ENCODE measurements at regions of chr5 and their contacts with region 1.

Region 1: GRCh38 chr5:178146020-178146820 is 7.5 kb downstream of the NHP2 start:
- DNase-seq: peak; percentile 49
- H3K4me3 Mint-ChIP-seq: no peak overlapping the region
- H3K27ac Mint-ChIP-seq: no peak overlapping the region
- H3K4me1 Mint-ChIP-seq: peaks cover 50% of the 10 kb centered on the region
- H3K27me3 Mint-ChIP-seq: no peaks in the 10 kb centered on the region

Region 2: GRCh38 chr5:178120868-178121357 is 25.3 kb before region 1 on chr5:
- intact Hi-C with region 1: loop called (anchors 2 kb)
- DNase-seq: peak; percentile 75
- H3K4me3 Mint-ChIP-seq: no peak overlapping the region
- H3K27ac Mint-ChIP-seq: no peak overlapping the region
- H3K4me1 Mint-ChIP-seq: peaks cover 13% of the 10 kb centered on the region
- H3K27me3 Mint-ChIP-seq: peaks cover 11% of the 10 kb centered on the region

Measured in activated T-helper 1 cell treated with anti-CD3 and anti-CD28 coated beads, Interleukin-12 subunit alpha, Interleukin-12 subunit beta, Interleukin-2, Interleukin-4 antibody, amounts not matched to agents 30 ng/mL and 10 ng/mL and 1 ng/mL, durations not matched to agents 14 hours and 24 hours and 36 hours (primary cell).